SK-N-SH (cell line): ENCODE measurements at regions of chrX and their contacts with region 1.

Region 1: DNA sequence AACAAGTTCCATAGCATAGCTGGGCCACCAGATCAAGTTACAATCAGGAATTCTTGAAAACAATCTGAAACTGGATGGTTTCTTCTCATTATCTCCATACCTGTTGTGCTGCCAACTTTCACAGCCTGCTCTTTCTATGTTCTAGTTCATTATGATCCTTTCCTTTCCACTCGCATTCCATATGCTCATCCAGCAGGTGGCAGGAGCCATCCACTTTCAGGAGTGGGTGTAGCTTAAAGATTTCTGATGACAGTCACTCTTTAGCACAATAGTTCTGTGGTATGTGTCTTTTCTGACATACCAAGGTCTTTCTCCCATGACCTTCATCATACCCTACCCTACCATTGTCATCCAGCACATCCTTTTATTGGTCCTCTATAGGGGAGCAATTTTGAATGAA is 46.4 kb downstream of the PAGE2 start:
- DNase-seq: peak; percentile 41
- H3K4me3 ChIP-seq: no peak overlapping the region
- H3K27ac ChIP-seq: no peak overlapping the region
- H3K4me1 ChIP-seq: no peaks in the 10 kb centered on the region
- H3K27me3 ChIP-seq: peaks cover 7% of the 10 kb centered on the region; the same call in 1 of the 2 replicates
- CTCF ChIP-seq: peak; percentile 65
- EP300 ChIP-seq: no peak
- RAD21 ChIP-seq: peak; percentile 81

Region 2: GRCh38 chrX:55088795-55089489 is 46.2 kb before region 1 on chrX and contains the start of gene PAGE2:
- CTCF ChIA-PET with region 1: no interaction called
- POLR2A ChIA-PET with region 1: no interaction called
- DNase-seq: no peak
- H3K4me3 ChIP-seq: no peak within 1 kb of the TSS
- H3K27ac ChIP-seq: no peak within 1 kb of the TSS
- H3K4me1 ChIP-seq: no peaks in the 10 kb centered on the region
- H3K27me3 ChIP-seq: no peaks in the 10 kb centered on the region
- CTCF ChIP-seq: no peak
- EP300 ChIP-seq: no peak
- RAD21 ChIP-seq: no peak
- polyA plus RNA-seq, gene PAGE2: 4.2 and 4.7 TPM in 2 replicates

Region 3: DNA sequence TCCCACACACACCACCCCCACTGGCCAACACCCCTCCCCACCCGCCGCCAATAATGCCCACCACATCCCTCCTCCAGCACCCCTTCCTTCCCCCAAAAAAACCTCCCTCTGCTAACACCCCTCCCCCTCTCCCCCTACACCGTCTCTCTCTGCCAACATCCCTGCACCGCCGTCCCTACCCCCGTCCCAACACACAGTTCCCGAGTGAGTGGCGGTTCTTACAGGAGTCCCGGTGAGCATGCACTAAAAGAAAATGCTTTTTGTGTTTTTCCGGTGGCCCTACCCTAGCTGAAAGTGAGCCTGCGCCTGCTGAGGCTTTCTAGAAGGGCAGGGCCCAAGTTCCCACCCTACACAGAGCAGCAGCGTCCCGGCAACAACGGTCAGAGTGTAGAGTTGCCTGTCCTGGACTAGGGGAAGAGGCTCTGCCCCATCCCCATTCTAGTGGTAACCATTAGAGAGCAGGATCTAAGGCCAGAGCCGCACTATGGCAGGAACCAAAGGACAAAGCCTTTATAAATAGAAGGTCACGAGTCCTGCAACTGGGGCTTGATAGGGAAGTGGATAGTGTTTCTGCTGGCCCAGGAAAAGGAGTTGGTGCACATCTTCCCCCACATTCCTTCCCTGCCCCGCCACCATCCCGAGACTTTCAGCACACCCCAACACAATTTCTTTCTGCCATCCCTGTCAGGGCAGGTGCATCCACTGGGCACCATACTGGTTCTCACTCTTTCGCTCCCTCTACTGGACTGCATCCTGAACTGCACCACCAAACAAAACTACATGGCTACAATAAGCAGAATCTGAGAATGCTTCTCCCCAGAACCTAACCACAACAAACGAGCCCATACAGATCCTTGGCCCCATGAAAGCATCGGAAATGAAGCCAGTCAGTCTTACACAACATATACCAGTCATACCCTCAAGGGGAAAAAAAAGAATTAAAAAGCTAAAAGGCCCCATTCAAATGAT is 207.6 kb after region 1 on chrX:
- CTCF ChIA-PET with region 1: interaction called, 14 read pairs
- POLR2A ChIA-PET with region 1: no interaction called
- DNase-seq: peak; percentile 48
- H3K4me3 ChIP-seq: no peak overlapping the region
- H3K27ac ChIP-seq: no peak overlapping the region
- H3K4me1 ChIP-seq: no peaks in the 10 kb centered on the region
- H3K27me3 ChIP-seq: peaks cover 6% of the 10 kb centered on the region; the same call in 1 of the 2 replicates
- CTCF ChIP-seq: peak; percentile 59
- EP300 ChIP-seq: no peak
- RAD21 ChIP-seq: peak; percentile 57